Activated T-helper 2 cell treated with anti-CD3 and anti-CD28 coated beads, Interferon-gamma antibody, Interleukin-2, Interleukin-4, amounts not matched to agents 10 μg/mL and 5 μg/mL and 100 μg/mL, durations not matched to agents 14 hours and 24 hours and 36 hours (primary cell): ENCODE measurements at regions of chr20 and their contacts with region 1.

Region 1: GRCh38 chr20:41095110-41095969 is 42.0 kb upstream of the PLCG1 start:
- DNase-seq: peak; percentile 35
- H3K4me3 Mint-ChIP-seq: no peak overlapping the region
- H3K27ac Mint-ChIP-seq: no peak overlapping the region
- H3K4me1 Mint-ChIP-seq: peaks cover 9% of the 10 kb centered on the region
- H3K27me3 Mint-ChIP-seq: no peaks in the 10 kb centered on the region

Region 2: GRCh38 chr20:40990542-40991120 is 104.7 kb before region 1 on chr20:
- intact Hi-C with region 1: loop called (anchors 1 kb)
- DNase-seq: peak; percentile 59
- H3K4me3 Mint-ChIP-seq: no peak overlapping the region
- H3K27ac Mint-ChIP-seq: peak overlapping the region; percentile 69
- H3K4me1 Mint-ChIP-seq: peaks cover 33% of the 10 kb centered on the region
- H3K27me3 Mint-ChIP-seq: no peaks in the 10 kb centered on the region